IMR-90 (cell line): ENCODE measurements at regions of chr5 and their contacts with region 1.

Region 1: GRCh38 chr5:56838409-56839039 is 23.2 kb downstream of the MAP3K1 start:
- DNase-seq: peak; percentile 74
- ATAC-seq: peak; percentile 67
- H3K4me3 ChIP-seq: peak overlapping the region; percentile 47; the same call in 1 of the 2 replicates
- H3K27ac ChIP-seq: peak overlapping the region; percentile 62; the same call in 1 of the 2 replicates
- H3K4me1 ChIP-seq: peaks cover 11% of the 10 kb centered on the region
- H3K27me3 ChIP-seq: no peaks in the 10 kb centered on the region
- CTCF ChIP-seq: peak; percentile 68
- POLR2A ChIP-seq: no peak
- RAD21 ChIP-seq: peak; percentile 83

Region 2: GRCh38 chr5:55936100-55936693 is 902.3 kb before region 1 on chr5:
- CTCF ChIA-PET with region 1: no interaction called
- POLR2A ChIA-PET with region 1: no interaction called
- dilution Hi-C with region 1: no loop called
- in situ Hi-C with region 1: no loop called
- intact Hi-C with region 1: loop called (anchors 10 kb)
- DNase-seq: peak; percentile 92
- ATAC-seq: peak; percentile 74
- H3K4me3 ChIP-seq: no peak overlapping the region
- H3K27ac ChIP-seq: no peak overlapping the region
- H3K4me1 ChIP-seq: no peaks in the 10 kb centered on the region
- H3K27me3 ChIP-seq: no peaks in the 10 kb centered on the region
- CTCF ChIP-seq: peak; percentile 91
- POLR2A ChIP-seq: no peak
- RAD21 ChIP-seq: peak; percentile 83

Region 3: DNA sequence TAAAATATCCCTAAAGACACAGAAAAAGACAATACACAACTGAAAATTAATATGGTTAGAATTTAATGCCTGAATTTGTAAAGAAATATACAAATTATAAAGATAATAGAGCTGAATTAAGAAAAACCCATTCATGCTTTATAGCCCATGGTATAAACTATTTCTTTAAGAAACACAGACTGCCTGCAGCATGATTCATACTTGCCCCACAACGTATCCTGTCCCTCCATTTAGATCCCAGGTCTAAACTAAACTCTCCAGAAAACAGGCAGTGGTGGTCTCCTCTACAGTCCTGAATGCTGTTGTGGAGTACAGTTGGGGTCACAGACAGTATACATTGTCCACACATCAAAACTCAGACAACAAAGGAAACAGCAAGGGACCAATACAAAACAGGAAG is 868.6 kb before region 1 on chr5:
- CTCF ChIA-PET with region 1: no interaction called
- POLR2A ChIA-PET with region 1: no interaction called
- dilution Hi-C with region 1: no loop called
- in situ Hi-C with region 1: loop called (anchors 10 kb)
- intact Hi-C with region 1: no loop called
- DNase-seq: peak; percentile 54
- ATAC-seq: peak; percentile 88
- H3K4me3 ChIP-seq: no peak overlapping the region
- H3K27ac ChIP-seq: peak overlapping the region; percentile 45
- H3K4me1 ChIP-seq: peaks cover 5% of the 10 kb centered on the region
- H3K27me3 ChIP-seq: no peaks in the 10 kb centered on the region
- CTCF ChIP-seq: no peak
- POLR2A ChIP-seq: no peak
- RAD21 ChIP-seq: no peak

Region 4: GRCh38 chr5:56102889-56103288 is 735.6 kb before region 1 on chr5:
- CTCF ChIA-PET with region 1: no interaction called
- POLR2A ChIA-PET with region 1: interaction called, 10 read pairs
- dilution Hi-C with region 1: no loop called
- in situ Hi-C with region 1: no loop called
- intact Hi-C with region 1: no loop called
- DNase-seq: peak; percentile 35
- ATAC-seq: no peak
- H3K4me3 ChIP-seq: no peak overlapping the region
- H3K27ac ChIP-seq: no peak overlapping the region
- H3K4me1 ChIP-seq: peaks cover 4% of the 10 kb centered on the region; the same call in 1 of the 2 replicates
- H3K27me3 ChIP-seq: no peaks in the 10 kb centered on the region
- CTCF ChIP-seq: no peak
- POLR2A ChIP-seq: no peak
- RAD21 ChIP-seq: no peak

Region 5: GRCh38 chr5:56346741-56347539 is 491.6 kb before region 1 on chr5:
- CTCF ChIA-PET with region 1: no interaction called
- POLR2A ChIA-PET with region 1: no interaction called
- dilution Hi-C with region 1: no loop called
- in situ Hi-C with region 1: no loop called
- intact Hi-C with region 1: loop called (anchors 10 kb)
- DNase-seq: peak; percentile 98
- ATAC-seq: peak; percentile 66
- H3K4me3 ChIP-seq: no peak overlapping the region
- H3K27ac ChIP-seq: peak overlapping the region; percentile 98
- H3K4me1 ChIP-seq: peaks cover 18% of the 10 kb centered on the region
- H3K27me3 ChIP-seq: no peaks in the 10 kb centered on the region
- CTCF ChIP-seq: no peak
- POLR2A ChIP-seq: no peak
- RAD21 ChIP-seq: no peak

Region 6: DNA sequence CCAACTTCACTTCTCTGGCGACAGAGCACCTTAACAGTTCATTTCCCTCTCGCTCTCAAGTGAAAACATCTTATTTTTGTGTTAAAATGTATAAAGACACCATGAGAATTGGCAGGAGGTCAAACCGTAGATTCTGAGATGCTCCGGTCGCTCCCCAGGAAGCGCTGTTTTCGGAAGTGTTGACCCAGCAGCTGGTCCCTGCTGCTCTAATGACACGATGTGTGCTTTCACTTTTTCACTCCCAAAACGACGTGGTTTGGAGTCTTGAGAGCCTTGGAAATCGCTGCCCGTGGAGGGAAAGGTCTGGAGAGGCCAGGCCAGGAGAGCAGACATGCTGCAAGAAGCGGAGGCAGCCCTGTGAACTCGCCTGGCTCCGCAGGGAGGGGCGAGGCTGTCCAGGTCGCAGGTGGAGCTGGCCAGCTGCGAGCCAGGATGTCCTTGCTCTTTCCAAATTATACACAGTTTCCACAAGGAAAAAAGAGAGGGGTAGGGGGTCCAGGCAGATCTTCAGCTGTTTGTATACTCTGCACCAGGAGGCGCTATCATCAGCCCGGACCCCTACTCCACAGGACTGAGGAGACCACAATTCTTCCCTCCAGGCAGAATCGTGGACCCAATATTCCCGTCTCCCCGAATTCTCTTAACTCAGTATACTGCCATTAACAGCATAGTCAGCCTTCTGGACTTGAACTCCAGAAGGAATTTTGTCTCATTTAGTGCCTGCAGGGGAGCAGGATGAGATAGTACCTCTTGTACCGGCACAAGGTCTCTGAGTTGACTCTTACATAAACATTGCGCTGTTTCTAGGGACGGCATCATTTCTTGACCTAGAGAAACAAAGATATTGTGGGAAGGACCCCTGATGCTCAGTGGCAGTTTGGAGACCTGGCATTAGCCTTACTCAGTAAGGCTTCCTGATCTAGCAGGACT is 356.8 kb before region 1 on chr5:
- CTCF ChIA-PET with region 1: no interaction called
- POLR2A ChIA-PET with region 1: no interaction called
- dilution Hi-C with region 1: no loop called
- in situ Hi-C with region 1: no loop called
- intact Hi-C with region 1: loop called (anchors 5 kb)
- DNase-seq: peak; percentile 54
- ATAC-seq: peak; percentile 31
- H3K4me3 ChIP-seq: peak overlapping the region; percentile 37
- H3K27ac ChIP-seq: peak overlapping the region; percentile 58
- H3K4me1 ChIP-seq: peaks cover 21% of the 10 kb centered on the region
- H3K27me3 ChIP-seq: no peaks in the 10 kb centered on the region
- CTCF ChIP-seq: peak; percentile 27; the same call in 1 of the 2 replicates
- POLR2A ChIP-seq: 0 out of 2 replicates have a peak, but pooled peaks have one; percentile 42
- RAD21 ChIP-seq: peak; percentile 12; the same call in 1 of the 2 replicates

Region 7: DNA sequence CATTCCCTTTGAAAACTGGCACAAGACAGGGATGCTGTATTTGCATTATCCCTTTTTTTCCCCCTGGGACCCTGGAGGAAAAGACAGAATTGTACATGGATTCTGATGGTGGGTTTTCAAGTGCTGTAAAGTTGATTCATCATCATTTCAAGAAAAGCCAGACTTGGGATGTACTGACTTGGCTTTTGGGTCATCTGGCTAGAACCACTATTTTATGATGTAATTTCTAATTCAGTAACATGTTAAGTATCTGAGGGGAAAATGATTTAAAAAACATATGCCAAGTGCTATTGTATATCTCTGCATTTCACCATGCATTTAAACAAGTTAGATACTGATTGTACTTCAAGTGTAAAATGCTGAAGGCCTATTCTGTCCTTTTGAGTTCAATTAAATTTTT is 38.3 kb before region 1 on chr5:
- CTCF ChIA-PET with region 1: no interaction called
- POLR2A ChIA-PET with region 1: no interaction called
- dilution Hi-C with region 1: no loop called
- in situ Hi-C with region 1: no loop called
- intact Hi-C with region 1: no loop called
- DNase-seq: no peak
- ATAC-seq: no peak
- H3K4me3 ChIP-seq: no peak overlapping the region
- H3K27ac ChIP-seq: no peak overlapping the region
- H3K4me1 ChIP-seq: no peaks in the 10 kb centered on the region
- H3K27me3 ChIP-seq: peaks cover 3% of the 10 kb centered on the region; the same call in 1 of the 2 replicates
- CTCF ChIP-seq: no peak
- POLR2A ChIP-seq: no peak
- RAD21 ChIP-seq: no peak